ENCODE measurements at regions of chr6 and their contacts with region 1.

Region 1: GRCh38 chr6:12605888-12606345 is 110.7 kb upstream of the PHACTR1 start:
- DNase-seq: peak; percentile 82
- ATAC-seq: peak; percentile 72
- H3K4me3 ChIP-seq: no peak overlapping the region
- H3K27ac ChIP-seq: no peak overlapping the region
- H3K4me1 ChIP-seq: peaks cover 15% of the 10 kb centered on the region
- H3K27me3 ChIP-seq: no peaks in the 10 kb centered on the region
- CTCF ChIP-seq: peak; percentile 91

Region 2: DNA sequence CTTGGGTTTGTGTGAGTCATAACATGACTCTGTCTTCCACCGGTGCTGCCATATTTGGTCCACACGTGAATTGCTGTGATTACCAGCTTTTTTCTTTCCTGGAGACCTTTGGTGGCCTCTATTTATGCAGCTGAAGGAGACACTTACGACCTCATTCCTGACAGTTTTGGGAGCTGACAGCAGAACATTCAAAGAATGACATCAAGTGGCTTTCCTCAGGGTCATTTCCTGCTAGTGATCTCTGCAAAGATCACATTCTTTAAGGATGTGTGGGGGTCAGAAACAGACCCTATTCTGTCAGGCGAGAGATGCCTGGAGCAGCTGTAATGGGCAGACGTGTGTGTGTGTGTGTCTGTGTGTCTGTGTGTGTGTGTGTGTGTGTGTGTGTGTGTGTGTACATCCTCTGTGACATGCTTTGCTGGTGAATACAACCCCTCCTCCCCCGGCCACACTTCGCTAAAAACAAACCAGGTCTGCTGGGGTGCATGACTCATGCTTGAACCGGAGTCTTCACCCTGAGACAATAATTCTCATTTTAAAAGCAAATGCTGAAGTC is 952.8 kb before region 1 on chr6:
- CTCF ChIA-PET with region 1: no interaction called
- POLR2A ChIA-PET with region 1: no interaction called
- intact Hi-C with region 1: loop called (anchors 10 kb)
- DNase-seq: peak; percentile 74
- ATAC-seq: peak; percentile 64
- H3K4me3 ChIP-seq: no peak overlapping the region
- H3K27ac ChIP-seq: no peak overlapping the region
- H3K4me1 ChIP-seq: peaks cover 37% of the 10 kb centered on the region
- H3K27me3 ChIP-seq: no peaks in the 10 kb centered on the region
- CTCF ChIP-seq: no peak

Region 3: GRCh38 chr6:12233693-12234571 is 372.0 kb before region 1 on chr6:
- CTCF ChIA-PET with region 1: no interaction called
- POLR2A ChIA-PET with region 1: no interaction called
- intact Hi-C with region 1: loop called (anchors 2 kb)
- DNase-seq: peak; percentile 90
- ATAC-seq: peak; percentile 94
- H3K4me3 ChIP-seq: no peak overlapping the region
- H3K27ac ChIP-seq: no peak overlapping the region
- H3K4me1 ChIP-seq: peaks cover 10% of the 10 kb centered on the region
- H3K27me3 ChIP-seq: no peaks in the 10 kb centered on the region
- CTCF ChIP-seq: peak; percentile 97

Region 4: DNA sequence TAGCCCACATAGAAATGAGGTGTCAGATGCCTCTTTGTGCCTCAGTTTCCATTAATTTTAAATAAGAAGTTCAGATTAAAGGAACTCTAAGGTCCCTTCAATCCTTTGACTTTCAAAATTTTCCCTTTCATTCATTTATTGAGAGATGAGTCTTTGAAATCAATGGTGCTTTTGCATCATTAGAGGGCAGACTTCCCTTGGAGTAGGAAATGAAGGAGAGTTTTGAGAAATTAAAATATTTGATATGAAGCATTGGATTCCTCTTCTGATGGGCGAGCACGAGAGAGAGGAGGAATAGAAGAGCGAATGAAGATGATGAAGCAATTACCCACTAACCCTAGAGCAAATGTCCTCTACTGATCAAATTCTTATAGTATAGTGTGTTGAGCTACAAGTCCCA is 210.0 kb before region 1 on chr6:
- CTCF ChIA-PET with region 1: no interaction called
- POLR2A ChIA-PET with region 1: no interaction called
- intact Hi-C with region 1: loop called (anchors 1 kb)
- DNase-seq: peak; percentile 24
- ATAC-seq: no peak
- H3K4me3 ChIP-seq: no peak overlapping the region
- H3K27ac ChIP-seq: no peak overlapping the region
- H3K4me1 ChIP-seq: no peaks in the 10 kb centered on the region
- H3K27me3 ChIP-seq: no peaks in the 10 kb centered on the region
- CTCF ChIP-seq: peak; percentile 63

Measured in PC-3 (cell line).